ENCODE measurements at regions of chr3 and their contacts with region 1.

Region 1: GRCh38 chr3:129052675-129053074 is 7.9 kb upstream of the GP9 start:
- DNase-seq: no peak
- ATAC-seq: no peak
- H3K4me3 ChIP-seq: no peak overlapping the region
- H3K27ac ChIP-seq: no peak overlapping the region
- H3K4me1 ChIP-seq: no peaks in the 10 kb centered on the region
- H3K27me3 ChIP-seq: no peaks in the 10 kb centered on the region; a peak in 1 of 4 replicates
- CTCF ChIP-seq: no peak
- EP300 ChIP-seq: no peak
- POLR2A ChIP-seq: no peak
- RAD21 ChIP-seq: no peak

Region 2: DNA sequence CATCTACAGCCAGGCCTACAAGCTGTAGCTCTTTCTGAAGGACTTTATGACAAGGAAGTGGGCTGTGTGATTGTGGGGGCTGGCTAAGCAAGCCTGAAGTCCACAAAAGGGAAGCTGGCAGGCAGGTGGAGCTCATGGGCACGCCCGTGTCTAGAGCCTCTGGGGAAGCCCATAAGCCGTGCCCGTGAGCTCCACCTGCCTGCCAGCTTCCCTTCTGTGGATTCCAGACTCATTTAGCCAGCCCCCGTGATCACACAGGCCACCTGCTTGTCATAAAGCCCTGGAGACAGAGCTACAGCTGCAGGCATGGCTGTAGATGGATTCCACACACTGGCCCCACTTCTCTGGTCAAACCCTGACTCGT is 36.3 kb before region 1 on chr3:
- CTCF ChIA-PET with region 1: interaction called, 20 read pairs
- POLR2A ChIA-PET with region 1: no interaction called
- RAD21 ChIA-PET with region 1: interaction called, 11 read pairs
- SMC1A ChIA-PET with region 1: interaction called, 5 read pairs
- in situ Hi-C with region 1: no loop called
- intact Hi-C with region 1: no loop called
- DNase-seq: no peak
- ATAC-seq: peak; percentile 77
- H3K4me3 ChIP-seq: no peak overlapping the region
- H3K27ac ChIP-seq: no peak overlapping the region
- H3K4me1 ChIP-seq: peaks cover 19% of the 10 kb centered on the region
- H3K27me3 ChIP-seq: no peaks in the 10 kb centered on the region
- CTCF ChIP-seq: peak in 1 of 3 experiments; percentile 12; a peak in 1 of 6 replicates
- EP300 ChIP-seq: no peak
- POLR2A ChIP-seq: no peak
- RAD21 ChIP-seq: no peak

Region 3: GRCh38 chr3:129120254-129121004 is 67.8 kb after region 1 on chr3:
- CTCF ChIA-PET with region 1: interaction called, 41 read pairs
- POLR2A ChIA-PET with region 1: interaction called, 8 read pairs
- RAD21 ChIA-PET with region 1: interaction called, 17 read pairs
- SMC1A ChIA-PET with region 1: interaction called, 25 read pairs
- in situ Hi-C with region 1: no loop called
- intact Hi-C with region 1: loop called (anchors 2 kb)
- DNase-seq: peak; percentile 89
- ATAC-seq: peak; percentile 82
- H3K4me3 ChIP-seq: peak overlapping the region; percentile 65
- H3K27ac ChIP-seq: peak overlapping the region; percentile 97
- H3K4me1 ChIP-seq: peaks cover 27% of the 10 kb centered on the region
- H3K27me3 ChIP-seq: no peaks in the 10 kb centered on the region
- CTCF ChIP-seq: peak; percentile 13 to 19 (median 18); a peak in 4 of 6 replicates
- EP300 ChIP-seq: no peak
- POLR2A ChIP-seq: peak; percentile 82
- RAD21 ChIP-seq: 0 out of 2 replicates have a peak, but pooled peaks have one; percentile 27

Region 4: GRCh38 chr3:129233538-129233937 is 180.9 kb after region 1 on chr3:
- CTCF ChIA-PET with region 1: interaction called, 39 read pairs
- POLR2A ChIA-PET with region 1: interaction called, 4 read pairs
- RAD21 ChIA-PET with region 1: interaction called, 5 read pairs
- SMC1A ChIA-PET with region 1: interaction called, 6 read pairs
- in situ Hi-C with region 1: no loop called
- intact Hi-C with region 1: no loop called
- DNase-seq: peak; percentile 91
- ATAC-seq: peak; percentile 97
- H3K4me3 ChIP-seq: no peak overlapping the region
- H3K27ac ChIP-seq: no peak overlapping the region
- H3K4me1 ChIP-seq: peaks cover 7% of the 10 kb centered on the region
- H3K27me3 ChIP-seq: no peaks in the 10 kb centered on the region
- CTCF ChIP-seq: no peak
- EP300 ChIP-seq: peak in 1 of 2 experiments; percentile 52; a peak in 1 of 4 replicates
- POLR2A ChIP-seq: no peak
- RAD21 ChIP-seq: no peak

Region 5: DNA sequence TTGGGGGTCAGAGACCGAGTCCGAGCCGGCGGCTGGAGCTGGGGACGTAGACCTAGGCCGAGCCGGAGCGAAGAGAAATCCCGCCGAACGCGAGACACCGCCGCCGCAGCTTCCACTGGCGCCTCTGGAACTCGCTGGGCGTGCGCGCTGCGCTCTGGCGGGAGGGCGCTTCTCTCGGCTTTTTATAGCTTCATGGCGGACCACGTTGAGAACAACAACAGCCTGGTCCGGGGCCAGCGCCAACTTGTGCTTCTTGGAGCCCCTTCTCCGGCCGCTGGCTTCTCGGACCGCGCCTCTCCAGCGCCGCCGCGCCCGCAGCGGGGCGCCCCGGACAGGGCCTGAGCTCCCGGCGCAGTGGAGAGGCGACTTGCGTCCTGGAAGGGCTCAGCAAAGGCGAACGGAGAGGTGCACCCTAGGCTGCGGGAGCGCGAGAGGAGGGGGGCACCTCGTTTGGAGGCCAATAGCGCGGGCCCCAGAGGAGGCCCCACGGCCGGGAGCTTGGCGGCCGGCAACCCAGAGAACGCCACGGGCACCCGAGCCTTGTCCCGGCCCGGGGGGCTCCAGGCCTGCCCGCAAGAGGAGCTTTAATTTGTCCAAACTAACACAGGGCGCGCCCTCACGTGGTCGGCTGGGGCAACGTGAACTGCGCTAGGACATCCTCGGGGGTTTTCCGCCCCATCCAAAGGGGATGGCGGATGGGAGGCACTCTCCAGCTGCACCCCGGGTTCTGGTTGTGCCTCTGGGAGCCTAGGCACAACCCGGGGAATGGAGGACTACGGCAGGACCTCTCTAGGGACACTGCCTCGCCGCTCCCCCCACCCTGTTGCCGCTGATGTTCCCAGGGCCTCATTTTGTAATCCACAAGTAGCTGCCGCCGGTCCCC is 263.7 kb after region 1 on chr3:
- CTCF ChIA-PET with region 1: interaction called, 20 read pairs
- POLR2A ChIA-PET with region 1: no interaction called
- RAD21 ChIA-PET with region 1: interaction called, 10 read pairs
- SMC1A ChIA-PET with region 1: no interaction called
- in situ Hi-C with region 1: no loop called
- intact Hi-C with region 1: no loop called
- DNase-seq: no peak
- ATAC-seq: peak; percentile 56
- H3K4me3 ChIP-seq: peak overlapping the region; percentile 88
- H3K27ac ChIP-seq: peak overlapping the region; percentile 41; the same call in 1 of the 2 replicates
- H3K4me1 ChIP-seq: peaks cover 16% of the 10 kb centered on the region
- H3K27me3 ChIP-seq: peaks cover 0 to 3% of the 10 kb centered on the region in 2 experiments; a peak in 2 of 4 replicates
- CTCF ChIP-seq: peak; percentile 61 to 76 (median 71)
- EP300 ChIP-seq: peak in 1 of 2 experiments; percentile 22; a peak in 1 of 4 replicates
- POLR2A ChIP-seq: peak; percentile 87
- RAD21 ChIP-seq: peak; percentile 52

Measured in GM12878 (cell line).